Activated B cell treated with CpG ODN at 0.5 μM for 24 hours (primary cell): ENCODE measurements at regions of chr4 and their contacts with region 1.

Region 1: GRCh38 chr4:78864405-78865024 is 74.7 kb downstream of the PAQR3 start:
- DNase-seq: no peak
- ATAC-seq: peak; percentile 47
- H3K4me3 Mint-ChIP-seq: peak overlapping the region; percentile 21
- H3K27ac Mint-ChIP-seq: peak overlapping the region; percentile 70
- H3K4me1 Mint-ChIP-seq: peaks cover 18% of the 10 kb centered on the region
- H3K27me3 Mint-ChIP-seq: no peaks in the 10 kb centered on the region
- CTCF ChIP-seq: peak; percentile 25

Region 2: DNA sequence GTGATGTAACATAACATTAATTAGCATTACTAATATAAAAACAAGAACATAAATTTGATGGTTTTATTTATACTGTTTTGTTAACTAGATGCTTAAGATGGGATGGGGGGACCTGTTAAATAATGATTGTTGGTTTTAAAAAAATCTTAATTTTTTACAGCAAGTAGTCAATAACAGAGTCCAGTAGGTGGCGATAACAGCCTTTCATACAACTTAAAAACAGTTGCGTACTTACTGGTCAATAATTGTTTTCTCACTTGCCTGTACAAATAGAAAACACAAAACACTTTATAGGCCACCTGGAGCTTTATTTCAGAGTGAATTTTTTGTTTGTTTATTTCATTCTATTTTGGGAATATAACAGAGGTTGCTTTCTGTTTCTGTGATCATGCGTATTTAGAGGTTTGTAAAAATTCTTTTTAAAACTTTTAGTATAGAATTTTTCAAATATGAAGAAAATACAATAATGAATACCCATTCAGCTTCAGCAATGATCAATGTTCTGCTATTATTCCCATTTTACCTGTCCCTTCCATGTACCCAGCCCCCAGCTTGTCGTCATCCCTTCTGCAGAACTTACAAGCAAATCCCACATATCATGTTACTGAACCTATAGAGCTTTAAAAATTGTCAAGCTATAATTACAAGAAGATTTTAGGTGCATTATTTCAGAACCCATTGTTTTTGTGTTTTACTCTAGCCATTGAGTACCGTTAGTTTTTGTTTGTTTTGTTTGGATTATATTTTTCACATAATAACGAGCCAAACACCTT is 904.8 kb before region 1 on chr4:
- CTCF ChIA-PET with region 1: interaction called, 4 read pairs
- POLR2A ChIA-PET with region 1: no interaction called
- intact Hi-C with region 1: loop called (anchors 1 kb)
- DNase-seq: no peak
- ATAC-seq: no peak
- H3K4me3 Mint-ChIP-seq: no peak overlapping the region
- H3K27ac Mint-ChIP-seq: no peak overlapping the region
- H3K4me1 Mint-ChIP-seq: no peaks in the 10 kb centered on the region
- H3K27me3 Mint-ChIP-seq: no peaks in the 10 kb centered on the region
- CTCF ChIP-seq: peak; percentile 73

Region 3: DNA sequence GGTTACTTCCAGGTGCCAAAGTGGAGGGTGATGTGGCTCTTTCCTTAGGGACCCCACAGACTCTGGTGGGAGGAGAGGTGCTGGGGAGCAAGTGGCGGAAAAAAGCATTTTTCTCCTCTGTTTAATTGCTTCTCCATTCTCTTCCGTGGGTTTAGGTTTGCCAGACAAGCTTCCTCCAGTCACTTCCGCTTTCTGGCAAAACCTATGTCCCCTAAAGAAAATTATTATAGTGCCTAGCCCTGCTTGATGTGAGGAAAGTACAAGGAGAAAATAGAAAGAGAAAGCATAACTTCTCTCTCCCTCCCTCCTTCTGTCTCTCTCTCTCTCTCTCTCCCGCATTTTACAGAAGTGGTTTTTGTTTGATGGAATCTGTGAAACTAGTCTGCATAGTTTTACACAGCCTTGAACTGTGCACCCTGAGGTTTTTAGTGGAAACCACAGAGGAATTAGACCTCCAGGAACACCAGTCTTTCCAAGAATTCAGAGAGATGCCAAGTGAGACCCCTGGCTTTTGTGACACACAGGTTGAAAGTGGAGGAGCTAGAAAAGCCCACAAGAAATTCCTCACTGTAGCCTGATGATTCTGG is 544.1 kb before region 1 on chr4:
- CTCF ChIA-PET with region 1: no interaction called
- POLR2A ChIA-PET with region 1: no interaction called
- intact Hi-C with region 1: loop called (anchors 10 kb)
- DNase-seq: no peak
- ATAC-seq: no peak
- H3K4me3 Mint-ChIP-seq: no peak overlapping the region
- H3K27ac Mint-ChIP-seq: no peak overlapping the region
- H3K4me1 Mint-ChIP-seq: peaks cover 8% of the 10 kb centered on the region
- H3K27me3 Mint-ChIP-seq: peaks cover 10% of the 10 kb centered on the region
- CTCF ChIP-seq: no peak

Region 4: DNA sequence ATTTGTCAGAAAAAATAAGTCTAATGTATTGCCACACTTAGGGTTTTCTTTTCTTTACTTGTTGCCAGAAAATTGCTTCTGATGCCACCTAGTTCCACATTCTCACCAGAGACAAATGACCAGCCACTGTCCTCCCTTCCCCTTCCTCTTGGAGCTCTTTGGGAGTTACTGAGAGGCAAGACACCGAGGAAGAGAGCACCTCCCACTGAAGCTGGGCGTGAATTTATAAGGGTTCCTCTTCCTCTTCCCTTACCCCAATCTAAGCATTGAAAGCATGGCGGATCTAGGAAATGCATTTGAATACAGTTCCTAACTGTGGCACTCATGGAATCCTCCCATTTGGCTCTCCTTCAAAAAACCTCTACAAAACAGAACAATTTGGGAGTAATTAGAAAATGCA is 282.9 kb before region 1 on chr4:
- CTCF ChIA-PET with region 1: no interaction called
- POLR2A ChIA-PET with region 1: no interaction called
- intact Hi-C with region 1: no loop called
- DNase-seq: no peak
- ATAC-seq: no peak
- H3K4me3 Mint-ChIP-seq: no peak overlapping the region
- H3K27ac Mint-ChIP-seq: no peak overlapping the region
- H3K4me1 Mint-ChIP-seq: no peaks in the 10 kb centered on the region
- H3K27me3 Mint-ChIP-seq: no peaks in the 10 kb centered on the region
- CTCF ChIP-seq: no peak

Region 5: DNA sequence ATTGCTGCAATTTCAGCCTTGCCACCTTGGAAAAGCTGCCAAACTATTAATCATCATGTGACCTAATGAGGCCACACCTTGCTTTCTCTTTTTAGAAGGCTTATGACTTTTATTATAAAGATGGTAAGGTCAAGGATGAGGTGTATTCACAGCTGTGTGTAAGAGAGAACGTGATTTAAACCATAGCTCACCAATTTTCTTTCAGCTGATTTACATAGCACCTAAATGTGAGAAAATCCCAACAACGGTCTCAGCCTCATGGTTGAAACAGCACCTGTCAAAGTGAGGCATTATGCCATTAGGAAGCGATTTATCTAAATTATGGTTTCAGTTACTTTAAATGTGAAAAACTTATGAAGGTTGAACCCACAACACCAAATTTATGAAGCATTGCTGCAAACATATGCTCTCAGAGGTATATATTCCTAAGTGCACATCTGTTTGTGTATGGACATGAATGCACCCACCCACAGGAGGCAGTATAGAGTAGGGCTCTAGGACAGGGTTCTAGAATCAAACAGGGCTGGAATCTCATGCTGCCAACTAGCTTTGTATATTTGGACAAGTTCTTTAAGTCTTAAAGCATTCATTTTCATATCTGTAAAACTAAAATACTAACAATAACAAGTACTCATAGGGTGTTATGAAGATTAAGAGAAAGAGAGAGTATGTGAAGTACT is 272.3 kb before region 1 on chr4:
- CTCF ChIA-PET with region 1: interaction called, 18 read pairs
- POLR2A ChIA-PET with region 1: no interaction called
- intact Hi-C with region 1: no loop called
- DNase-seq: no peak
- ATAC-seq: no peak
- H3K4me3 Mint-ChIP-seq: no peak overlapping the region
- H3K27ac Mint-ChIP-seq: no peak overlapping the region
- H3K4me1 Mint-ChIP-seq: peaks cover 22% of the 10 kb centered on the region
- H3K27me3 Mint-ChIP-seq: no peaks in the 10 kb centered on the region
- CTCF ChIP-seq: no peak

Region 6: GRCh38 chr4:78749972-78750727 is 114.4 kb before region 1 on chr4:
- CTCF ChIA-PET with region 1: no interaction called
- POLR2A ChIA-PET with region 1: interaction called, 4 read pairs
- intact Hi-C with region 1: loop called (anchors 1 kb)
- DNase-seq: no peak
- ATAC-seq: peak; percentile 83
- H3K4me3 Mint-ChIP-seq: peak overlapping the region; percentile 74
- H3K27ac Mint-ChIP-seq: peak overlapping the region; percentile 93
- H3K4me1 Mint-ChIP-seq: peaks cover 72% of the 10 kb centered on the region
- H3K27me3 Mint-ChIP-seq: no peaks in the 10 kb centered on the region
- CTCF ChIP-seq: no peak

Region 7: GRCh38 chr4:78824001-78824400 is 40.5 kb before region 1 on chr4:
- CTCF ChIA-PET with region 1: no interaction called
- POLR2A ChIA-PET with region 1: no interaction called
- intact Hi-C with region 1: loop called (anchors 5 kb)
- DNase-seq: no peak
- ATAC-seq: no peak
- H3K4me3 Mint-ChIP-seq: no peak overlapping the region
- H3K27ac Mint-ChIP-seq: peak overlapping the region; percentile 30
- H3K4me1 Mint-ChIP-seq: peaks cover 49% of the 10 kb centered on the region
- H3K27me3 Mint-ChIP-seq: no peaks in the 10 kb centered on the region
- CTCF ChIP-seq: no peak